Activated B cell treated with CpG ODN at 0.5 μM for 24 hours (primary cell): ENCODE measurements at regions of chr1 and their contacts with region 1.

Region 1: DNA sequence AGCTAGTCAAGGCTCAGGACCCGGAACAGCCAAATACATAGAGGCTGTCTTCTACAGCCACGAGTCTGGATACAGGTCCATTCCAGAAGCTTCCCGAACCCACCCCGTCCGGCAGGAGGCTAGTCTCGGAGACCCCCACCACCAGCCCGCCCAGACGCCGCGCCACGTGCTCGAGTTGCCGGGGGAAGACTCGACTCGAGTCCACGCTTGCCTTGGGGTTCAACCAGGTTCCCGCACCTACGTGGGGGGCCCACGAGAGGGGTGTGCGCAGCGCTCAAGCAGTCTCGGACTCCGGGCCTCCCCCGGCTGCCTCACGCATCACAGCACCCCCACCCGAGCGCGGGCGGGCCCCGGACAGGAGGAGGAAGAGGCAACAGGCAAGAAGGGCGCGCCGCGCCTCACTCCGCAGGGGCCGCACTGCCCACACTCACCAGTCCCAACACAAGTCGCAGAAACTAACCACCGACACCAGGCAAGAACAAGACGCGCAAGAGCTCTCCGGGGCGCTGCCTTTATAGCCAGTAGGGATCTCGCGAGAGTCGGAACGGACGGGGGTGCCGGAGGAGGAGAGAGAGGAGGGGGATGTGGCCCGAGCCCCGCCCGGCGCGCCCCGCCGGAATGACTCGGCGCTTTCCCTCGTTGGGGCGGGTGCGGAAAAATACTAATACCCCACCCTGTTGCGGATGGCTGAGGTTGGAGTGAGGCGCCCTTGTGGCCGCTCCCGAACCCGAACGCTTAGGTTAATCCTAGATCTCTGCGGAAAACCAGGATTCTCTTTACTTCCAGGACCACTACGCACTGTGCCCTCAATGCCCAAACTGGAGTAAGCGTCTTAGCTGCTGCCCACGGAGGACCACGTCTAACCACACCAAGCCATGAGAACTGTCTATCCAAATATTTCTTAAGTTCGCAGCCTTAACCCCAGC is at the start of gene PRDX1:
- DNase-seq: peak; percentile 98
- ATAC-seq: peak; percentile 87
- H3K4me3 Mint-ChIP-seq: peak within 1 kb of the TSS; percentile 93
- H3K27ac Mint-ChIP-seq: peak within 1 kb of the TSS; percentile 92
- H3K4me1 Mint-ChIP-seq: peaks cover 49% of the 10 kb centered on the region
- H3K27me3 Mint-ChIP-seq: no peaks in the 10 kb centered on the region
- CTCF ChIP-seq: no peak
- total RNA-seq, gene PRDX1: 351 and 413 TPM in 2 replicates

Region 2: GRCh38 chr1:44807262-44808062 is 714.2 kb before region 1 on chr1 and contains the start of gene DYNLT4:
- CTCF ChIA-PET with region 1: no interaction called
- POLR2A ChIA-PET with region 1: interaction called, 13 read pairs
- intact Hi-C with region 1: no loop called
- DNase-seq: peak; percentile 67
- ATAC-seq: peak; percentile 32
- H3K4me3 Mint-ChIP-seq: peak within 1 kb of the TSS; percentile 63
- H3K27ac Mint-ChIP-seq: peak within 1 kb of the TSS; percentile 97
- H3K4me1 Mint-ChIP-seq: peaks cover 67% of the 10 kb centered on the region
- H3K27me3 Mint-ChIP-seq: no peaks in the 10 kb centered on the region
- CTCF ChIP-seq: no peak
- total RNA-seq, gene DYNLT4: not detected in 2 replicates

Region 3: GRCh38 chr1:45470306-45470798 is 51.3 kb before region 1 on chr1:
- CTCF ChIA-PET with region 1: no interaction called
- POLR2A ChIA-PET with region 1: interaction called, 14 read pairs
- intact Hi-C with region 1: no loop called
- DNase-seq: no peak
- ATAC-seq: peak; percentile 19
- H3K4me3 Mint-ChIP-seq: no peak overlapping the region
- H3K27ac Mint-ChIP-seq: no peak overlapping the region
- H3K4me1 Mint-ChIP-seq: peaks cover 50% of the 10 kb centered on the region
- H3K27me3 Mint-ChIP-seq: no peaks in the 10 kb centered on the region
- CTCF ChIP-seq: no peak

Region 4: DNA sequence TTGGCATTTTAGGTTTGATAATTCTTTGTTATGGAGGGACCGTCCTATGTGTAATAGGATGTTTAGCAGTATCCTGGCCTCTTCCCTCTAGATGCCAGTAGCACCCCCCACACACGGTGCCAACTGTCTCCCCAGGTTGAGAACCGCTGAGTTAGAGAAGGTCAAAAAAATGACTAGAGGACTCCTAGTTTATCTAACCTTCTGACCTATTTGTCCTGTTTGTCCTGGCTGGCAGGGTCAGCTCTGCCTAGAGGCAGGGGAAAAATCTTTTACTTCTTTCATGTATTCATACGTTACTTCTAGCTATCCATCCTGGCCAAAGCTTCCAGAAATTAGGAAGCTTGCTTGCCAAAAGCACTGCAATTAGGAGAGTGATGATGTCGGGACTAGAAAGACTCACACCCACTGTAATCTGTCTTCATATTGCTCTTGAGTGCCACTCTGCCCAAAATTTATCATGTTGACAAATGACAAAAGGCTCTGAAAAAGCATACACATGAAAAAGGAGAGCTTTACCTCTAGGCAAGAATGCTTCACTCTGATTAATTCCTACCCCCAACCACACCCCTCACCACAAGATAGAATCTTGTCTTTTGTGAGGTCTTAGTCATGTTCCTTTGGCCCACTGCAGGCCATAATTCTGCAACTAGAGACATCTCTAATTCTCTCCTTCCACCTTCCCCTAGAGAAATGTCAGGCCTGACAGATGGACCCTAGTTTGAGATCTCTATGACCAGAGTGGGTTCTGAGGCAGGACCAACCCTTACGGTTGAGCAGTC is 14.5 kb after region 1 on chr1:
- CTCF ChIA-PET with region 1: no interaction called
- POLR2A ChIA-PET with region 1: interaction called, 457 read pairs
- intact Hi-C with region 1: no loop called
- DNase-seq: no peak
- ATAC-seq: no peak
- H3K4me3 Mint-ChIP-seq: no peak overlapping the region
- H3K27ac Mint-ChIP-seq: no peak overlapping the region
- H3K4me1 Mint-ChIP-seq: peaks cover 6% of the 10 kb centered on the region
- H3K27me3 Mint-ChIP-seq: no peaks in the 10 kb centered on the region
- CTCF ChIP-seq: no peak

Region 5: GRCh38 chr1:45550401-45551351 is 29.0 kb after region 1 on chr1 and contains the start of gene AKR1A1:
- CTCF ChIA-PET with region 1: interaction called, 11 read pairs
- POLR2A ChIA-PET with region 1: interaction called, 457 read pairs
- intact Hi-C with region 1: loop called (anchors 1 kb)
- DNase-seq: peak; percentile 91
- ATAC-seq: peak; percentile 91
- H3K4me3 Mint-ChIP-seq: peak within 1 kb of the TSS; percentile 99
- H3K27ac Mint-ChIP-seq: peak within 1 kb of the TSS; percentile 95
- H3K4me1 Mint-ChIP-seq: peaks cover 35% of the 10 kb centered on the region
- H3K27me3 Mint-ChIP-seq: no peaks in the 10 kb centered on the region
- CTCF ChIP-seq: no peak
- total RNA-seq, gene AKR1A1: 215 and 218 TPM in 2 replicates

Region 6: GRCh38 chr1:45569962-45570581 is 48.4 kb after region 1 on chr1:
- CTCF ChIA-PET with region 1: interaction called, 24 read pairs
- POLR2A ChIA-PET with region 1: interaction called, 33 read pairs
- intact Hi-C with region 1: loop called (anchors 2 kb)
- DNase-seq: peak; percentile 48
- ATAC-seq: peak; percentile 98
- H3K4me3 Mint-ChIP-seq: no peak overlapping the region
- H3K27ac Mint-ChIP-seq: no peak overlapping the region
- H3K4me1 Mint-ChIP-seq: no peaks in the 10 kb centered on the region
- H3K27me3 Mint-ChIP-seq: no peaks in the 10 kb centered on the region
- CTCF ChIP-seq: peak; percentile 17